B cell (primary cell): ENCODE measurements at regions of chr11 and their contacts with region 1.

Region 1: DNA sequence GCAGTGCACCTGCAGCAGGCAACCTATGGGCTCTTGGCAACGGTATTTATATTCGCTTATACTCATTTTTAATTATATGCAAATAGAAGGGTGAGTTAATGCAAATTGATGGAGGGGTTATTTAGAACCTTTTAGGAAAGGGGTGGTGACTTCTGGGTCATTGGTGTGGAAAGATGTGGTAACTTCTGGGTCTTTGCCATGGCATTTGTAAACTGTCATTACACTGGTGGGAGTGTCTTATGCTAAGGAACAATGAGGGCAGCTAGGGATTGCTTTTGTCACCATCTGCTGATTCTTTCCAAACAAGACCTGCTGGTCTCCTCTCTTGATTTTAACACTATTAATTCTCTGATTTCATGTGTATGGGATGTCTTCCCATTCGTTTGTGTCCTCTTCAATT is 11.7 kb upstream of the KAT5 start:
- DNase-seq: peak; percentile 48
- ATAC-seq: peak; percentile 76
- H3K4me3 ChIP-seq: no peak overlapping the region
- H3K4me3 Mint-ChIP-seq: no peak overlapping the region
- H3K27ac ChIP-seq: no peak overlapping the region
- H3K27ac Mint-ChIP-seq: no peak overlapping the region
- H3K4me1 ChIP-seq: peaks cover 5 to 7% of the 10 kb centered on the region in 2 donors
- H3K4me1 Mint-ChIP-seq: peaks cover 9% of the 10 kb centered on the region
- H3K27me3 ChIP-seq: no peaks in the 10 kb centered on the region
- H3K27me3 Mint-ChIP-seq: peaks cover 3% of the 10 kb centered on the region
- CTCF ChIP-seq: no peak

Region 2: DNA sequence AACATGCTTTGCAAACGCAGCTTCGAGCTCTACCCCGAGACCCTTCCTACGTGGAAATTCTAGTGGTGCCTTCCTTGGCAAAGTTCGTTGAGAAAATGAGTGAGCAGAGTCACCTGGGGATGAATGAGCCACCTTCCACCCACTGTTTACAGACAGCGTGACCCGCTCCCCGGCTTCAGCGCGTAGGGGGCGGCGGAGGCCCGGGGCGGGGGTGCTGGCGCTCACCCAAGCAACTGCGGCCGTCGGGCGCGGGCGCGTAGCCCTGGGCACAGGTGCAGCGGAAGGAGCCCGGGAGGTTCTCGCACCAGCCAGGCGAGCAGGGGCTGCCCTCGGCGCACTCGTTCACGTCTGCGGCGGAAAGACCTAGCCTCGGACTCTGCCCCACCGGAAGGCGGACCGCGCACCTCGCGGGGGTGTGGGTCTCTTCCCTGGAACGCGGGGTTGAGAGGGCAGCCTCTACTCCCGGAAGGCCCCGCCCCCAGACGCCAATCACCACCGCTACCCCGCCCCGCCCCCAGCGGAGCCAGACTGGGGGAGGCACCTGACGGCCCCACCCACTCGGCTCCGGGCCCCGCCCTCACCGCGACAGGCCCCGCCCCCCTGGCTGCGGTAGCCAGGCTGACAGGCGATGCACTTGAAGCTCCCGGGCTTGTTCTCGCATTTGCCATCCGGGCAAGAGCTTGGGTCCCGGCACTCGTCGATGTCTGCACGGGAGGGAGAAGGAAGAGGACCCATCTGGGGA is 154.0 kb before region 1 on chr11:
- CTCF ChIA-PET with region 1: no interaction called
- POLR2A ChIA-PET with region 1: interaction called, 10 read pairs
- intact Hi-C with region 1: no loop called
- DNase-seq: peak; percentile 98
- ATAC-seq: peak; percentile 89
- H3K4me3 ChIP-seq: peak overlapping the region in 4 of 5 experiments; percentile 40 to 60 (median 52)
- H3K4me3 Mint-ChIP-seq: peak overlapping the region; percentile 89
- H3K27ac ChIP-seq: peak overlapping the region; percentile 79 to 93
- H3K27ac Mint-ChIP-seq: peak overlapping the region; percentile 93
- H3K4me1 ChIP-seq: peaks cover 34 to 50% of the 10 kb centered on the region in 2 donors
- H3K4me1 Mint-ChIP-seq: peaks cover 59% of the 10 kb centered on the region
- H3K27me3 ChIP-seq: no peaks in the 10 kb centered on the region
- H3K27me3 Mint-ChIP-seq: no peaks in the 10 kb centered on the region
- CTCF ChIP-seq: no peak

Region 3: DNA sequence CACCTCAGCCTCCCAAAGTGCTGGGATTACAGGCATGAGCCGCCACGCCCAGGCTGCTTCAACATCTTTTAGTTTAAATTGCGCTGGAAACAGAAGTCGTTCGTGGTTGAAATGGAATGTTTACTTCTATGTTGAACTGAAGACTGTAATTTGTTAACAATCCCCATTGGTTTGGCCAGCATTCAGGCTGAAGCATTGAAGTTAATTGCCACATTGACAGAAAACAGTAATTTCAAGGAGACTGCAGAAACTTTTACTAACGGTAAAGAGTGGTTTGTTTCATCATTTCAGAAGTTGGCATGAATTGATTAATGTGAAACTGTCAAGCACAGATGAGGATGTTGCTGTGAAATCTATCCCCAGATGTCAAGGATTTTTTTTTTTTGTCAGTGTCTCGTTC is 66.1 kb after region 1 on chr11:
- CTCF ChIA-PET with region 1: interaction called, 10 read pairs
- POLR2A ChIA-PET with region 1: no interaction called
- intact Hi-C with region 1: no loop called
- DNase-seq: no peak
- ATAC-seq: no peak
- H3K4me3 ChIP-seq: no peak overlapping the region
- H3K4me3 Mint-ChIP-seq: no peak overlapping the region
- H3K27ac ChIP-seq: no peak overlapping the region
- H3K27ac Mint-ChIP-seq: no peak overlapping the region
- H3K4me1 ChIP-seq: peaks cover 0 to 4% of the 10 kb centered on the region in 2 donors
- H3K4me1 Mint-ChIP-seq: peaks cover 3% of the 10 kb centered on the region
- H3K27me3 ChIP-seq: no peaks in the 10 kb centered on the region
- H3K27me3 Mint-ChIP-seq: peaks cover under 1% of the 10 kb centered on the region
- CTCF ChIP-seq: no peak